IMR-90 (cell line): ENCODE measurements at regions of chr18 and their contacts with region 1.

Region 1: GRCh38 chr18:12726774-12727550 is 24.1 kb downstream of the PSMG2 start:
- DNase-seq: peak; percentile 74
- ATAC-seq: peak; percentile 80
- H3K4me3 ChIP-seq: no peak overlapping the region
- H3K27ac ChIP-seq: no peak overlapping the region
- H3K4me1 ChIP-seq: no peaks in the 10 kb centered on the region; the same call in 1 of the 2 replicates
- H3K27me3 ChIP-seq: no peaks in the 10 kb centered on the region
- CTCF ChIP-seq: peak; percentile 89
- POLR2A ChIP-seq: no peak
- RAD21 ChIP-seq: peak; percentile 92

Region 2: GRCh38 chr18:12744103-12744502 is 17.1 kb after region 1 on chr18:
- CTCF ChIA-PET with region 1: interaction called, 8 read pairs
- POLR2A ChIA-PET with region 1: no interaction called
- dilution Hi-C with region 1: no loop called
- in situ Hi-C with region 1: no loop called
- intact Hi-C with region 1: loop called (anchors 2 kb)
- DNase-seq: peak; percentile 84
- ATAC-seq: peak; percentile 76
- H3K4me3 ChIP-seq: no peak overlapping the region
- H3K27ac ChIP-seq: no peak overlapping the region
- H3K4me1 ChIP-seq: peaks cover 6% of the 10 kb centered on the region
- H3K27me3 ChIP-seq: no peaks in the 10 kb centered on the region
- CTCF ChIP-seq: peak; percentile 87
- POLR2A ChIP-seq: no peak
- RAD21 ChIP-seq: peak; percentile 88

Region 3: DNA sequence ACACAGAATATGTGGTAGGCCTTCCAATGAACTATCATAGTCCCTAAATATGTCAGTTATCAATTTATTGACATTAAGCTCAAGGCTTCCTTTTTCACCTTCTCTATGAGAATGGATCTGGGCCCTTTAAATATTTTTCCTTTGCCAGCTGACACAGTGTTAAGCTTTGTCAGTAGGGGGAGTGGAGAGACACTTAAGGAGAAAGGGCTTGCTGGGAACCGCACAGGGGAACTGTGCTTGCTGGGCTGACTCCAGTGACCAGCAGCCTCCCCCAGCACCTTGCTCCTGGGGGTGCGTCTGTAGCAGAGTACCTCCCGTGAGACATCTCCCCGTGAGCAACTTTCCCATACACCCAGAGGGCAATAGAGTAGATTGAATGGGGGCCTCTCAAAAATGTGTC is 163.5 kb after region 1 on chr18:
- CTCF ChIA-PET with region 1: interaction called, 4 read pairs
- POLR2A ChIA-PET with region 1: no interaction called
- dilution Hi-C with region 1: no loop called
- in situ Hi-C with region 1: no loop called
- intact Hi-C with region 1: loop called (anchors 5 kb)
- DNase-seq: no peak
- ATAC-seq: no peak
- H3K4me3 ChIP-seq: no peak overlapping the region
- H3K27ac ChIP-seq: no peak overlapping the region
- H3K4me1 ChIP-seq: no peaks in the 10 kb centered on the region
- H3K27me3 ChIP-seq: 0 out of 2 replicates have a peak, but pooled peaks cover 4% of the 10 kb centered on the region
- CTCF ChIP-seq: 0 out of 2 replicates have a peak, but pooled peaks have one; percentile 10
- POLR2A ChIP-seq: no peak
- RAD21 ChIP-seq: no peak